CD8-positive, alpha-beta T cell (primary cell): ENCODE measurements at regions of chr5 and their contacts with region 1.

Region 1: GRCh38 chr5:141628175-141628788 is 8.4 kb downstream of the HDAC3 start:
- DNase-seq: no peak
- ATAC-seq: no peak
- H3K4me3 ChIP-seq: no peak overlapping the region
- H3K4me3 Mint-ChIP-seq: no peak overlapping the region
- H3K27ac ChIP-seq: no peak overlapping the region
- H3K27ac Mint-ChIP-seq: no peak overlapping the region
- H3K4me1 ChIP-seq: no peaks in the 10 kb centered on the region
- H3K4me1 Mint-ChIP-seq: peaks cover 21% of the 10 kb centered on the region
- H3K27me3 ChIP-seq: no peaks in the 10 kb centered on the region
- H3K27me3 Mint-ChIP-seq: no peaks in the 10 kb centered on the region
- CTCF ChIP-seq: no peak

Region 2: GRCh38 chr5:141412854-141413539 is 215.3 kb before region 1 on chr5 and contains the start of gene PCDHGA10:
- CTCF ChIA-PET with region 1: no interaction called
- POLR2A ChIA-PET with region 1: no interaction called
- intact Hi-C with region 1: loop called in 1 of 2 experiments (anchors 5 kb)
- DNase-seq: peak in 8 of 9 experiments; percentile 18 to 67 (median 50)
- ATAC-seq: peak; percentile 74
- H3K4me3 ChIP-seq: peak within 1 kb of the TSS; percentile 32 to 61
- H3K4me3 Mint-ChIP-seq: peak within 1 kb of the TSS; percentile 83
- H3K27ac ChIP-seq: no peak within 1 kb of the TSS
- H3K27ac Mint-ChIP-seq: no peak within 1 kb of the TSS
- H3K4me1 ChIP-seq: peaks cover 4% of the 10 kb centered on the region
- H3K4me1 Mint-ChIP-seq: peaks cover 18% of the 10 kb centered on the region
- H3K27me3 ChIP-seq: peaks cover 26 to 27% of the 10 kb centered on the region in 2 experiments
- H3K27me3 Mint-ChIP-seq: peaks cover 70% of the 10 kb centered on the region
- CTCF ChIP-seq: peak; percentile 82
- total RNA-seq, gene PCDHGA10: 0.08 TPM in 1 of 2 experiments, not detected in the other

Region 3: GRCh38 chr5:141598391-141599350 is 29.6 kb before region 1 on chr5:
- CTCF ChIA-PET with region 1: interaction called, 366 read pairs
- POLR2A ChIA-PET with region 1: interaction called, 4 read pairs
- intact Hi-C with region 1: no loop called
- DNase-seq: peak in 1 of 9 experiments; percentile 29
- ATAC-seq: peak; percentile 44
- H3K4me3 ChIP-seq: no peak overlapping the region
- H3K4me3 Mint-ChIP-seq: peak overlapping the region; percentile 40
- H3K27ac ChIP-seq: peak overlapping the region in 1 of 2 experiments; percentile 67
- H3K27ac Mint-ChIP-seq: peak overlapping the region; percentile 78
- H3K4me1 ChIP-seq: peaks cover 69% of the 10 kb centered on the region
- H3K4me1 Mint-ChIP-seq: peaks cover 80% of the 10 kb centered on the region
- H3K27me3 ChIP-seq: no peaks in the 10 kb centered on the region
- H3K27me3 Mint-ChIP-seq: no peaks in the 10 kb centered on the region
- CTCF ChIP-seq: no peak